Colonic mucosa (tissue), 4 donors: ENCODE measurements at regions of chrX and their contacts with region 1.

Region 1: GRCh38 chrX:11770320-11770719 is 12.3 kb downstream of the MSL3 start:
- DNase-seq: no peak
- H3K4me3 ChIP-seq: no peak overlapping the region
- H3K27ac ChIP-seq: no peak overlapping the region
- H3K4me1 ChIP-seq: no peaks in the 10 kb centered on the region
- H3K27me3 ChIP-seq: no peaks in the 10 kb centered on the region
- CTCF ChIP-seq: peak; percentile 88

Region 2: DNA sequence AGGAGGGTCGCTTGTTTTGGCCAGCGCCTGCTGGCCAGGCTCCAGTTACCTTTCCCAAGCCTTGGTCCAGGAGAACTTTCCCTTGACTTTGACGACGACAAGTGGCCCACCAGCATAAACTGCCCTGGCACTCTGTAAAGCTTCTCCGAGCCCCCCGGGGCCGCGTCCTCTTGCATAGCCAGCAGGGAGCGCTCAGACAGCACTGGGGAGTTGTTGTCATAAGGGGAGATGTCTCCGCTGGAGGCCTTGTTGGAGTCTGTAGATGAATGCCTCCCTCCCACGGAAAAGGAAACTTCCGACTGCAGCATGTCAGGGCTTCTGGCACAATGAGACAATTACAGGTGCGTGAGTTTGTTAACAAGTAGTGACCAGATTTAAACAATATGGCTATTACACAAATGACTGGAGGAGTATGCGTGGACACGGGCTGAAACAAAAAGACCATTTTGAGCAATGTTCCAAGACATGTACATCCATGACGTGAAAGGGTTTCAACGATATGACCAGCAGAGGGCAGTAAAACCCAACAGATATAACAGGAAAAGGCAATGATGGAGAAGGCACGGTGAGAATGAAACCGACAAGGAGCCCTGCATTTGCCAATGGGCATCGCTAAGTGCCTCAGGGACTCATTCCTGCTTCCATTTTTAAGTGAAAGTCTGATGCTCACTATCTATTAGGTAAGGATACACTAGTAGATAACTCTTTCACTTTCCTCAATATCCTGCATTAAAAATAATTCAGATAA is 626.2 kb before region 1 on chrX:
- intact Hi-C with region 1: loop called (anchors 10 kb)
- DNase-seq: peak; percentile 82
- H3K4me3 ChIP-seq: no peak overlapping the region
- H3K27ac ChIP-seq: no peak overlapping the region
- H3K4me1 ChIP-seq: no peaks in the 10 kb centered on the region
- H3K27me3 ChIP-seq: no peaks in the 10 kb centered on the region
- CTCF ChIP-seq: peak; percentile 71

Region 3: GRCh38 chrX:11533211-11533651 is 237.1 kb before region 1 on chrX:
- intact Hi-C with region 1: loop called (anchors 5 kb)
- DNase-seq: no peak
- H3K4me3 ChIP-seq: no peak overlapping the region
- H3K27ac ChIP-seq: no peak overlapping the region
- H3K4me1 ChIP-seq: no peaks in the 10 kb centered on the region
- H3K27me3 ChIP-seq: no peaks in the 10 kb centered on the region
- CTCF ChIP-seq: peak; percentile 90